ENCODE measurements at regions of chr16 and their contacts with region 1.

Region 1: GRCh38 chr16:88194397-88195268 is 188.1 kb upstream of the ZNF469 start:
- DNase-seq: no peak
- H3K4me3 ChIP-seq: no peak overlapping the region
- H3K27ac ChIP-seq: no peak overlapping the region
- H3K4me1 ChIP-seq: no peaks in the 10 kb centered on the region
- H3K27me3 ChIP-seq: no peaks in the 10 kb centered on the region
- CTCF ChIP-seq: no peak

Region 2: DNA sequence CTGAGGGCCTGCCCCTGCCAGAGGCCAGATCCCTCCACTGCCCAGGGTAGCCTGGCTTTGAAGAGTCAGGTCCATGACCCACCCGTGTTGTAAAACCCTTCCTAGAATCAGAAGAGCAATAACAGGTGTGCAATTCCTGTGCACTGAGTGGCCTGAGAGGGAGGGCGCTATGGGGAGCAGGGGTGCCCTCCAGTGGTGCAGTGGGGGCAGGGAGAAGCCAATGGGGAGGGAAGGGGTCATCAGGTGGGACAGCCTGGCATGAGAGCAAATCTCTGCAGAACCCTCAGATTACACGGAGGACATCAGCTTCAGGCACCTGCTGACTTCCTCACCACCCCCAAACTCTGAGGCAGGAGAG is 115.3 kb after region 1 on chr16:
- CTCF ChIA-PET with region 1: no interaction called
- dilution Hi-C with region 1: no loop called
- in situ Hi-C with region 1: no loop called
- intact Hi-C with region 1: loop called (anchors 2 kb)
- DNase-seq: no peak
- H3K4me3 ChIP-seq: no peak overlapping the region
- H3K27ac ChIP-seq: no peak overlapping the region
- H3K4me1 ChIP-seq: peaks cover 27% of the 10 kb centered on the region
- H3K27me3 ChIP-seq: no peaks in the 10 kb centered on the region
- CTCF ChIP-seq: peak in 1 of 2 donors; percentile 50

Region 3: GRCh38 chr16:88633684-88634140 is 439.1 kb after region 1 on chr16:
- CTCF ChIA-PET with region 1: no interaction called
- dilution Hi-C with region 1: no loop called
- in situ Hi-C with region 1: no loop called
- intact Hi-C with region 1: no loop called
- DNase-seq: peak; percentile 24
- H3K4me3 ChIP-seq: no peak overlapping the region
- H3K27ac ChIP-seq: no peak overlapping the region
- H3K4me1 ChIP-seq: peaks cover 22% of the 10 kb centered on the region
- H3K27me3 ChIP-seq: peaks cover under 1% of the 10 kb centered on the region
- CTCF ChIP-seq: peak; percentile 35 to 42

Measured in mammary epithelial cell (primary cell).